ENCODE measurements at regions of chr3 and their contacts with region 1.

Region 1: DNA sequence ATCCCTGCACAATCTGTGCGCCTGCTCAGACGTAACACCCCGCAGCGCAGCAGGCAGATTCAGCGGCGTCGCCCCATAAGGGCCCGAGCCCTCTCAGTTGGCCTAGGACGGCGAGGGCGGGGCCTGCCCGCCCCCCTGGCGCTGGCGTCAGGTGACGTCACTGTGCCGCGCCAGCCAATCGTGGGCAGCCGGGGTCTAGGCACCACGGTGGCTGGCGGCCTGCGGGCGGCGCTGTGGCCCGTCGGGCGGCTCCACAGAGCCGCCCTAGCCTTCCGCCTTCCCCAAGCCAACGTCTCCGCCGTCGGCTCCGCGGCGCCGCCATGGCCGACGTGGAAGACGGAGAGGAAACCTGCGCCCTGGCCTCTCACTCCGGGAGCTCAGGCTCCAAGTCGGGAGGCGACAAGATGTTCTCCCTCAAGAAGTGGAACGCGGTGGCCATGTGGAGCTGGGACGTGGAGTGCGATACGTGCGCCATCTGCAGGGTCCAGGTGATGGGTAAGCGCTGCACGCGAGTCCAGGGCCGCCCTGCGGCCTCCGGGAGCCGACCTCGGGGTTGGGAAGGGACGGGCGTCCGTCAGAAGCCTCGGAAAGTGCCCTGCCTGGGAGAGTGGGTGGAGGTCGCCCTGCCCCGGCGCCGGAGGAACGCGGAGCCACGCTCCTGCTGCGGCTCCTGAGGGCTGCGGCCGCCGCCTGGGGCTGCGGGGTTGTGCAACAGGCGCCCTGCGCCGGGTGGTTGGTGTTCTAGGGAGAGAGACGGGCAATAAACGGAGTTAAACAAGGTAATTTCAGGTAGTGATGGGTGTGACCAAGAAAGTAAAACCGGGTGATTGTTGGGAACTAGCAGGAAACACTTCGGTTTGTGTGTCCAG is at the start of gene RNF7:
- DNase-seq: peak; percentile 96
- H3K4me3 Mint-ChIP-seq: peak within 1 kb of the TSS; percentile 90
- H3K27ac Mint-ChIP-seq: peak within 1 kb of the TSS; percentile 98
- H3K4me1 Mint-ChIP-seq: peaks cover 18% of the 10 kb centered on the region
- H3K27me3 Mint-ChIP-seq: peaks cover 10% of the 10 kb centered on the region
- CTCF ChIP-seq: peak; percentile 85
- total RNA-seq, gene RNF7: 96.1 and 112 TPM in 2 replicates

Region 2: GRCh38 chr3:141575879-141576743 is 162.1 kb before region 1 on chr3:
- CTCF ChIA-PET with region 1: interaction called, 13 read pairs
- POLR2A ChIA-PET with region 1: interaction called, 5 read pairs
- intact Hi-C with region 1: loop called (anchors 2 kb)
- DNase-seq: peak; percentile 8
- H3K4me3 Mint-ChIP-seq: no peak overlapping the region
- H3K27ac Mint-ChIP-seq: peak overlapping the region; percentile 44
- H3K4me1 Mint-ChIP-seq: peaks cover 9% of the 10 kb centered on the region
- H3K27me3 Mint-ChIP-seq: no peaks in the 10 kb centered on the region
- CTCF ChIP-seq: peak; percentile 42

Region 3: DNA sequence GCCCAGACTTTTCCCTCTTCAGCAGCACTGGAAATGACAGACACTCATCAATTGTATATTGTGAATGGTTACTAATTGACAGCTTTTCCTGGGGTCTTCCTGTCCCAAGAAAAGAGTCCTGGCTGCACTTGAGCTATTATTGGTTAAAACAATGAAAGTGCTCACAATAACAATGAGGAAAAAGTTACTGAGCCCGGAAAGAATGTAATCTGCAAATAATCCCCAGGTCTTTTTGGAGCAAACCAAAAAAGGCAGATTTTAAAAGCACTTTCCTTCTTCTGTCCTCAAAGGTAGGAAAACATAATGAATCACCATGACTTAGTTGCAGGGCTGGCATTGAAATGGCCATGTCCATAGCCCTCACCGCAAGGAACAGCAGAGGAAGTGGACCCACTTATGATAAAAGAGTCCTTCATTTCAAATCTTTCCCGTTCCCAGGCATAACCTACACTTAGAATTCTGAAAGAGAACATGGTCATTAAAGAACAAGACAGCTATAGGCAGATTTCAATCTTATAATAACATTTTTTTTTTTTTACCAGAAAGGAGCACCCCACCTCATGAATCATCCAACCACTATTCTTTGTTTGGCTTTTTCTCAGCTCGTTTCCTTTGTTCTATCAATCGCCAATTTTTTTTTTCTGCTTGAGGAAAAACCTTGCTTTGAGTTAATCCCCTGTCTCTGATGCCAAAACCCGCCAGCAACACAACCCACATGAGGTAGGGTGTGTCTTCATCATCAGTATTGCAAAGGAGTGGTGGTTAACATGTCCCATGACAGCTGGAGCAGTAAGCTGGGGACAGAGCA is 102.7 kb after region 1 on chr3:
- CTCF ChIA-PET with region 1: interaction called, 3 read pairs
- POLR2A ChIA-PET with region 1: interaction called, 13 read pairs
- intact Hi-C with region 1: no loop called
- DNase-seq: peak; percentile 82
- H3K4me3 Mint-ChIP-seq: peak overlapping the region; percentile 53
- H3K27ac Mint-ChIP-seq: peak overlapping the region; percentile 92
- H3K4me1 Mint-ChIP-seq: peaks cover 14% of the 10 kb centered on the region
- H3K27me3 Mint-ChIP-seq: no peaks in the 10 kb centered on the region
- CTCF ChIP-seq: no peak

Region 4: DNA sequence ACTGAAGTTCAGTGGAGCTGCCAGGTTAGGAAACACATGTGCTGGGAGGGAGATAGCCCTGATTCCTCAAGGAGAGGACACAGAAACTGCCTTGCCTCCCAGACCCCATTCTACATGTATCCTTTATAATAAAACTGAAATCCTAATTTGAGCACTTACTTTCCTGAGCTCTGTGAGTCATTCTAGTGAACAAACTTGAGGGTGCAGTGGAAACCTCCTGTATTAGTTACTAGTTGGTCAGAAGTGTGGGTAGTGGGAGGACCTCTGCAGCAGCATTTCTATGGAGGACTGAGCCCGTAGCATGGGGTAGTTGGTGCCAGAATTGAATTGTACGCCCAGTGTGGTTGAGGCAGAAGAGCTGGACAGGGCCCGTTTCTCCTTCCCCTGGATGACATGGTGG is 162.1 kb after region 1 on chr3:
- CTCF ChIA-PET with region 1: interaction called, 13 read pairs
- POLR2A ChIA-PET with region 1: interaction called, 3 read pairs
- intact Hi-C with region 1: no loop called
- DNase-seq: no peak
- H3K4me3 Mint-ChIP-seq: no peak overlapping the region
- H3K27ac Mint-ChIP-seq: no peak overlapping the region
- H3K4me1 Mint-ChIP-seq: peaks cover 16% of the 10 kb centered on the region
- H3K27me3 Mint-ChIP-seq: no peaks in the 10 kb centered on the region
- CTCF ChIP-seq: no peak

Region 5: DNA sequence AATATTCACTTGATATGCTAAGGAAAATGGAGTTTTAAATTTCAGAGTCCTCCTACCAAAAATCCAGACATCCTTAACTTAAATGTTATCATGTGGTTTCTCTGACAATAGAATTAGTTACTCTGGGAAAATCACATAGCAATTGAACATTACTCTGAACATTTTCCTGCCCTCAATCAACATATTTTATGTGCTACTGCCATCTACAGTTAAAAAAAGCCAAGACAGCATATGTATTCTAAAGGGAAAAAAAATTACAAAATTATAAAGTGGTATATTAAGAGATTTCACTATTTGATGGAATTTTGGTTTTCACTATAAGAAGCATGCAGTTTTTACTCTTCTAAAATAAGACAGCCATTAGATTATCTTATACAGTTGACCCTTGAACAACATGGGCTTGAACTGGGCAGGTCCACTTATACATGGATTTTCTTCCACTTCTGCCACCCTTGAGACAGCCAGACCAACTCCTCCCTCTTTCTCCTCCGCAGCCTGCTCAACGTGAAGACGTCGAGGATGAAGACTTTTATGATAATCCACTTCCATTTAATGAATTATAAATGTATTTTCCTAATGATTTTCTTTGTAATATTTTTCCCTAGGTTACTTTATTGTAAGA is 260.5 kb after region 1 on chr3:
- CTCF ChIA-PET with region 1: no interaction called
- POLR2A ChIA-PET with region 1: interaction called, 3 read pairs
- intact Hi-C with region 1: loop called (anchors 1 kb)
- DNase-seq: peak; percentile 23
- H3K4me3 Mint-ChIP-seq: no peak overlapping the region
- H3K27ac Mint-ChIP-seq: no peak overlapping the region
- H3K4me1 Mint-ChIP-seq: no peaks in the 10 kb centered on the region
- H3K27me3 Mint-ChIP-seq: no peaks in the 10 kb centered on the region
- CTCF ChIP-seq: peak; percentile 35